A673 (cell line): ENCODE measurements at regions of chr17 and their contacts with region 1.

Region 1: GRCh38 chr17:51914577-51914976 is 243.9 kb downstream of the CA10 start:
- DNase-seq: no peak
- H3K4me3 ChIP-seq: no peak overlapping the region
- H3K27ac ChIP-seq: no peak overlapping the region
- H3K4me1 ChIP-seq: no peaks in the 10 kb centered on the region
- H3K27me3 ChIP-seq: no peaks in the 10 kb centered on the region
- CTCF ChIP-seq: no peak

Region 2: DNA sequence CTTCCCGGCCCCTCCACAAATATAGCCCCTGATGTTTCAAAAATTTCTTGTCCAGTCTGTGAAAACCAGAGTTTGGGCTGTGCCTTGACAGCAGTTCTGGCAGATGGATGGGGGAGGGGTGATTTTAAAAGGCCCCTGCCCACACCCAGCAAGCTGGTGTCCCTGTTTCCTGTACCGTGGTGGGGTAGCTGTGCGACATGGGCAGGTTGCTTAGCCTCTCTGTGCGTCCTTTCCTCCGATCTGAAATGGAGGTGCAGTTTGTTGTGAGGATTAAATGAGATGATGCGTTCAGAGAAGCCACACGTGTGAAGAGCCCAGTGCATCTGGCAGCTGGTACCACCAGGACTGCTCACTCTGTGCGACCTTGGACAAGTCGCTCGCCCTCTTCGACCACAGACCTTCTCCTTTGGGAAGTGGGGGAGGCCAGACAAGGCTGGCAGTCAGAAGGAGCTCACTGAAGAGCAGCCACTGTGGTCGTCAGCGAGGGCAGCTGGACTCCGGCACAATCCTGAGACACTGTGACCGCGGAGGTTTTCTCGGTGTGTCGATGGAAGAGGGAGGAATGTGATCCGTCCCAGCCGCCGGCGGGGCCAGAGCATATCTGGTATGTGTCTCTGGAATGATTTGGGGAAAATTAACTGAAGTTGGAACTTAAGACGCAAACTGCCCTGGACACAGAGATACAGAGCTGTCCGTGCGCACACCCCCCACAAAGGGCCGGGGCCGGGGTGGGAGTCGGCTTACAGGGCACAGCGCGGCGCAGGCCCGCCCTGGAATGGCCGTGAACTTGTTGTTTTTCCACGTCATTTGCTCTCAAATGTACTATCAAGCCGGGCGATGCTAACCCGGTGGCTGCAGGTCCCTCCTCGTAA is 1079.9 kb before region 1 on chr17:
- CTCF ChIA-PET with region 1: no interaction called
- POLR2A ChIA-PET with region 1: interaction called, 13 read pairs
- intact Hi-C with region 1: no loop called
- DNase-seq: no peak
- H3K4me3 ChIP-seq: no peak overlapping the region
- H3K27ac ChIP-seq: no peak overlapping the region
- H3K4me1 ChIP-seq: no peaks in the 10 kb centered on the region
- H3K27me3 ChIP-seq: no peaks in the 10 kb centered on the region
- CTCF ChIP-seq: no peak